Activated CD4-positive, alpha-beta memory T cell treated with anti-CD3 and anti-CD28 coated beads for 36 hours (primary cell): ENCODE measurements at regions of chr11 and their contacts with region 1.

Region 1: GRCh38 chr11:36289226-36289852 is at the start of gene COMMD9:
- DNase-seq: peak; percentile 98
- H3K4me3 Mint-ChIP-seq: peak within 1 kb of the TSS; percentile 89
- H3K27ac Mint-ChIP-seq: peak within 1 kb of the TSS; percentile 74
- H3K4me1 Mint-ChIP-seq: peaks cover 32% of the 10 kb centered on the region
- H3K27me3 Mint-ChIP-seq: no peaks in the 10 kb centered on the region
- total RNA-seq, gene COMMD9: 23.7 to 28.1 TPM

Region 2: GRCh38 chr11:36300651-36301050 is 11.3 kb after region 1 on chr11:
- CTCF ChIA-PET with region 1: interaction called, 10 read pairs
- POLR2A ChIA-PET with region 1: no interaction called
- intact Hi-C with region 1: no loop called
- DNase-seq: no peak
- H3K4me3 Mint-ChIP-seq: no peak overlapping the region
- H3K27ac Mint-ChIP-seq: no peak overlapping the region
- H3K4me1 Mint-ChIP-seq: no peaks in the 10 kb centered on the region
- H3K27me3 Mint-ChIP-seq: no peaks in the 10 kb centered on the region

Region 3: GRCh38 chr11:36390963-36391471 is 101.7 kb after region 1 on chr11:
- CTCF ChIA-PET with region 1: interaction called, 3 read pairs
- POLR2A ChIA-PET with region 1: interaction called, 4 read pairs
- intact Hi-C with region 1: loop called (anchors 5 kb)
- DNase-seq: peak; percentile 68
- H3K4me3 Mint-ChIP-seq: peak overlapping the region; percentile 36
- H3K27ac Mint-ChIP-seq: peak overlapping the region; percentile 96
- H3K4me1 Mint-ChIP-seq: peaks cover 82% of the 10 kb centered on the region
- H3K27me3 Mint-ChIP-seq: no peaks in the 10 kb centered on the region

Region 4: DNA sequence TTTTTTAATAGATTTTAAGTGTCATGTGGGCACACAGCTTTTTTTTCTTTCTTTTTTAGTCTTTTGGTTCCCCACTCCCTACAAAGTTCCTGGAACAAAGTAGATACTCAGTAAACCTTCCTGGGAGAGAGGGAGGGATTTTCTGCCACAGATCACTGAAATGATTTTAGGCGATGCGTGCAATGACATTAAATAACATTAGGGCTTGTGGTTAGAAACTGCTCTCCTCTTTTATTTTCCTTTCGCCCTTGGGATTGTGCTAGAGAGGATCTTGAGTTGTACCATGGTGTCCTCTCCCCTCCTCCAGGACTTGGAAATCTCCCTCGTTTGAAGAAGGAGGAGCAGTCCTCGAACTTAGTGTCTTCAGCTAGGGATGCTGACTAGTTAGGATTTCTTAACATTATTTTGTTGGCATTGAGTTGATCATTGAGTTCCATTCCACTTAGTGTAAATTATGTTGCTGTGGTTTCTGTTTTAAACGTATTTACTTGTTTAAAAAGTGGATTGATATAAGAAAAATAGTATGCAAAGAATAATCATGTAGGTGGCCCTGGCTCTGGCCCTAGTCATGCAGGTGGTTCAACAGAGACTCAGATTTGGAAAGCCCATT is 132.3 kb after region 1 on chr11:
- CTCF ChIA-PET with region 1: no interaction called
- POLR2A ChIA-PET with region 1: no interaction called
- intact Hi-C with region 1: no loop called
- DNase-seq: no peak
- H3K4me3 Mint-ChIP-seq: peak overlapping the region; percentile 31
- H3K27ac Mint-ChIP-seq: peak overlapping the region; percentile 85
- H3K4me1 Mint-ChIP-seq: peaks cover 79% of the 10 kb centered on the region
- H3K27me3 Mint-ChIP-seq: no peaks in the 10 kb centered on the region

Region 5: DNA sequence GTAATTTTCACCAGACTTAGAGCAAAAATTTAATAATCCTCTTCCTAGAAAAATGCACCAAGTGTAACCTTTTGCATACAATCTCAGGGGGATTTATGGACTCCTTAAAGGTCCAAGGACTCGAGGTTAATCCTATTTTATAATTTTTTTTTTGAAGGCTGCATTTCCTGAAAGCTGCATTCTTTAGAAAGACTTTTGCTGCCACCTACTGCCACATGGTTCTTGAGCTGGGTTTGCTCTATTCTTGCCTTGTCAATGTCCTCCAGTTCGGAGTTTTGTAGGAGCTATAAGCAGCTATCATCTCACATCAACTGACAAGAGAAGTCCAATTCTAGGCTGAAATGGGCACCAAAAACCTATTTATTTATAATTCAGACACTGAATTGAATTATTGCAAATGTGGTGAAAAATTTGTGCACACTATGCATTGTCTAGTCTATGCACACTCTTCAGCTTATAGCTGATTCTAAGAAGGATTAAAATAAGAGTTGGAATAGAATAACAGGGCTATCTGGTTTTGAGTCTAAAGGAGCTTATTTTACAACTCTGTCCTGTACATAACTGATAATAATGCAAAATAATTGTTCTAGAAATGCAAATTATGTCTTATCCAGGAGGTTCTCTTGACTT is 189.5 kb after region 1 on chr11:
- CTCF ChIA-PET with region 1: interaction called, 129 read pairs
- POLR2A ChIA-PET with region 1: interaction called, 7 read pairs
- intact Hi-C with region 1: loop called (anchors 1 kb)
- DNase-seq: peak; percentile 38
- H3K4me3 Mint-ChIP-seq: no peak overlapping the region
- H3K27ac Mint-ChIP-seq: no peak overlapping the region
- H3K4me1 Mint-ChIP-seq: peaks cover 12% of the 10 kb centered on the region
- H3K27me3 Mint-ChIP-seq: no peaks in the 10 kb centered on the region

Region 6: DNA sequence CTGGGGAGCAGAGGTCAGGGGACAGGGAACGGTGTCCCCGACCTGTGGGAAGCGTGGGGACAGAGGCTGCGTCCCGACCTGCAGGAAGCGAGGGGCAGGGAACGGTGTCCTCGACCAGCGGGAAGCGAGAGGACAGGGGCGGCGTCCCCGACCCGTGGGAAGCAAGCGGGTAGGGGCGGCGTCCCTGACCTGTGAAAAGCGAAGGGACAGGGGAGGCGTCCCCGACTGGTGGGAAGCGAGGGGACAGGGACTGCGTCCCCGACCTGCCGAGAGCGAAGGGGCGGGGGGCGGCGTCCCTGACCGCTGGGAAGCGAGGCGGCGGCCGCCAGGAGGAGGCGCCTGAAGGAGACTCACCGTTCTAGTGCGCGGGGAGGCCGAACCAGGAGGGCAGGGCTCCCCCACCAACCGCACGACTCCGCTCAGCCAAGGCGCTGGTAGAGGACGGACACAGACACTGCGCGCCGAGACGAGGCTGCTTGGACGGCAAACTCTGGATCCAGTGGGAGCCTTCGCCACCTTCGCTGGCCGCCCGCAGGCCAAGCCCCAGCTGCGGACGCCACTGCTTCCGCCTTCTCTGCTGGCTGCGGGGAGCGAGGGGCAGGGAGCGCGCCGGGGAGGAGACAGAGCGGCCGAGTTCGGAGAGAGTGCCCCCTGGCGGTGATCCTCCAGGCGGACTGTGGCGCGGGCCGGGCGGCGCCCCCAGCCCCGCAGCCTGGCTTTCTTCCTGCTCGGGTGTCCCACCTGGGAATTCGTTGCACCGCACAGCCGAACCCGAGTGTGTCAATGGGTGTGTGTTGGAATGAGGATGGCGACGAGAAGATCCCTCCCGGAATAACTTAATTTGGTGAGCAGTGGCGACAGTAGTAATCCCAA is 220.6 kb after region 1 on chr11 and contains the start of gene TRAF6:
- CTCF ChIA-PET with region 1: interaction called, 25 read pairs
- POLR2A ChIA-PET with region 1: no interaction called
- intact Hi-C with region 1: loop called (anchors 1 kb)
- DNase-seq: peak; percentile 92
- H3K4me3 Mint-ChIP-seq: peak within 1 kb of the TSS; percentile 94
- H3K27ac Mint-ChIP-seq: peak within 1 kb of the TSS; percentile 86
- H3K4me1 Mint-ChIP-seq: peaks cover 27% of the 10 kb centered on the region
- H3K27me3 Mint-ChIP-seq: peaks cover 5% of the 10 kb centered on the region
- total RNA-seq, gene TRAF6: 12.0 to 12.1 TPM

Region 7: GRCh38 chr11:36746886-36747710 is 457.8 kb after region 1 on chr11:
- CTCF ChIA-PET with region 1: interaction called, 14 read pairs
- POLR2A ChIA-PET with region 1: no interaction called
- intact Hi-C with region 1: loop called (anchors 1 kb)
- DNase-seq: peak; percentile 91
- H3K4me3 Mint-ChIP-seq: no peak overlapping the region
- H3K27ac Mint-ChIP-seq: no peak overlapping the region
- H3K4me1 Mint-ChIP-seq: peaks cover 3% of the 10 kb centered on the region
- H3K27me3 Mint-ChIP-seq: peaks cover 11% of the 10 kb centered on the region